Activated CD4-positive, alpha-beta memory T cell treated with anti-CD3 and anti-CD28 coated beads for 36 hours (primary cell): ENCODE measurements at regions of chr7 and their contacts with region 1.

Region 1: GRCh38 chr7:157336383-157337315 is at the start of gene DNAJB6:
- DNase-seq: peak; percentile 96
- H3K4me3 Mint-ChIP-seq: peak within 1 kb of the TSS; percentile 96
- H3K27ac Mint-ChIP-seq: peak within 1 kb of the TSS; percentile 97
- H3K4me1 Mint-ChIP-seq: peaks cover 33% of the 10 kb centered on the region
- H3K27me3 Mint-ChIP-seq: peaks cover 3% of the 10 kb centered on the region
- total RNA-seq, gene DNAJB6: 90.7 to 97.2 TPM

Region 2: DNA sequence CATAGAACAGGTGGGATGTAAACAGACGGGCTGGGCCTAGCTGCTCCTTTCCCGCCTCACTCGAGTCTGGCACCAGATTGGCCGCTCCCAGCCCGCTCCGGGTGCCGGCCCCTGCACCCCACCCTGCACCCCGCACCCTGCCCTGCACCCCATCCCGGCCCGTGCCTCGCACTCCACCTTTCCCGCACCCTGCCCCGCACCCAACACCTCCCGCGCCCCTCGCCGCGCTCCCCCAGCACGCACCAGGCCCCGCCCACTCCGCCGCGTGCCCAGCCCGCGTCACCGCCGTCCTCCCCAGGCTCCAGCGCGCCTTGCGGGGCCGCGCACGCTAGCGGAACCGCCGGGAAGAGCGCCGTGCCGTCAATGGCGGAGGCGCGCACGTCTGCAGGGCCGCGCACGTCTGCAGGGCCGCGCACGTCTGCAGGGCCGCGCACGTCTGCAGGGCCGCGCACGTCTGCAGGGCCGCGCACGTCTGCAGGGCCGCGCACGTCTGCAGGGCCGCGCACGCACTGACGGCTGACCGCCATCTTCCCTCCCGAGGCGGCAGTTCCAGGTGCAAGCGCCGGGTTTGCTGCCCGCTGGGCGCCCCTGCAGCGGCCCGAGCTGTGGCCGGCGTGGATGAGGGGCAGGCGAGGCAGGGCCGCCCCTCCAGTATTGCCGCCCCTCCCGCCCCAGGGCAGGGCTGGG is 198.1 kb before region 1 on chr7 and contains the start of gene UBE3C:
- CTCF ChIA-PET with region 1: interaction called, 3 read pairs
- POLR2A ChIA-PET with region 1: no interaction called
- intact Hi-C with region 1: loop called (anchors 2 kb)
- DNase-seq: peak; percentile 91
- H3K4me3 Mint-ChIP-seq: peak within 1 kb of the TSS; percentile 79
- H3K27ac Mint-ChIP-seq: peak within 1 kb of the TSS; percentile 91
- H3K4me1 Mint-ChIP-seq: peaks cover 37% of the 10 kb centered on the region
- H3K27me3 Mint-ChIP-seq: no peaks in the 10 kb centered on the region
- total RNA-seq, gene UBE3C: 59.8 to 59.9 TPM

Region 3: DNA sequence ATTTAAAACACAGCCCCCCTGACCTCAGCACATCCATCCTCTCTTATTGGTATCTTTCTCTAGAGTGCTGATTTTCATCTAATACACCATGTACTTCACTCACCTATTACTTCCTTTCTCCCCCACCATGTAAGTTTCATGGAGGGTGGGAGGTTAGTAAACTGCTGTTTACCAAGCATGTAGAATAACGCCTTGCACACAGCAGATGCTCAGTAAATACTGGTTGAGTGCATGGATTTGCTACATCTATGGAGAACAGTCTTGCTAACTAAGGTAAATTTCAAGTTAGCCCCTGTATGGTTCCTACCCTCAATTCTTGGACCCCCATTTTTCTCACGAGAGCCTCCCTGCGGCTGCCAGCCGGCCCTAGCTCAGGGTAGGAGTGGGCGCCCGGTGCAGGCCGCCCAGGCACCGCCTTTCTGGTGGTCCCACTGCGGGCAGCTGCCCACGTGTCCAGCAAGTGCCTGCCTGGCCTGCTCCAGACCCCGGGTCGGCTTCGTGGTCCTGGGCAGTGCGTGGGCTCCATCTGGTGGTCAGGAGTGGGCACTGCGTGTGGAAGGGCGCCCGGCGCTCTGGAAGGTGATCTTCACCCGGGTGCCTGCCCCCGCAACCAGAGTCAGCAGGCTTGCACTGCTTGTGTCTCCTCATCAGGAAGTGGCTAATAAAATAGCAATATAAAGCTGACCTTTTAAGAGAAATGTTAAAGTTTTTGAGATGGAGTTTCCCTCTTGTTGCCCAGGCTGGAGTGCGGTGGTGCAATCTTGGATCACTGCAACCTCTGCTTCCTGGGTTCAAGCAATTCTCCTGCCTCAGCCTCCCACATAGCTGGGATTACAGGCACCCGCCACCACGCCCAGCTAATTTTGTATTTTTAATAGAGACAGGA is 63.2 kb before region 1 on chr7:
- CTCF ChIA-PET with region 1: interaction called, 16 read pairs
- POLR2A ChIA-PET with region 1: no interaction called
- intact Hi-C with region 1: loop called (anchors 2 kb)
- DNase-seq: peak; percentile 75
- H3K4me3 Mint-ChIP-seq: no peak overlapping the region
- H3K27ac Mint-ChIP-seq: no peak overlapping the region
- H3K4me1 Mint-ChIP-seq: peaks cover 27% of the 10 kb centered on the region
- H3K27me3 Mint-ChIP-seq: peaks cover 3% of the 10 kb centered on the region

Region 4: DNA sequence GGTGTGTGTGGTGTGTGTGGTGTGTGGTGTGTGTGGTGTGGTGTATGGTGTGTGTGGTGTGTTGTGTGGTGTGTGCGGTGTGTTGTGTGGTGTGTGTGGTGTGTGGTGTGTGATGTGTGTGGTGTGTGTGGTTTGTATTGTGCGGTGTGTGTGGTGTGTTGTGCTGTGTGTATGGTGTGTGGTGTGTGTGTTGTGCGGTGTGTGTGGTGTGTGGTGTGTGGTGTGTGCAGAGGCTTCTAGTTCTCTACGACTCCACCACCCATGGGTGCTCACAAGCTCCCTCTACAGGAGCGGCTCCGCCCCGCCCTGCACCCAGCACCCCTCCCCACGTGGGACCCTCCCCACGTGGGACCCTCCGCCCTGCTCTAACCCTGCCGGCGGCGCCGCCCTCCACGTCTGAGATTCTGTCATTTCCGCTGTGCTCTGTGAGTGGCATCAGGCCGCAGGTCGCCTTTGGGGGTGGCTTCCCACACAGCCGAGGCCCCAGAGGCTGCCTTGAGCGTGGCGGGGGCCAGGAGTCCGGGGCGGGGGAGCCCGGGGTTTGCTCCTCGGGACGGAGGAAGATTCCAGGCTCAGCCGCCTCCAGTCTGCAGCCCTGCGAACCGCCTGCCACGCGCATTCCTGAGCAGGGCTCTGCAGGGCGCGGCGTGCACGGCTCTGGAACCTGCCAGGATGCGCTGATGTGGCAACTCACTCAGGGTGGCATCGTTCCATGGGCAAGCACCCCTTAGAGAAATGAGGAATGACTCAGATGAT is 36.9 kb before region 1 on chr7:
- CTCF ChIA-PET with region 1: interaction called, 18 read pairs
- POLR2A ChIA-PET with region 1: interaction called, 16 read pairs
- intact Hi-C with region 1: loop called (anchors 1 kb)
- DNase-seq: peak; percentile 44
- H3K4me3 Mint-ChIP-seq: no peak overlapping the region
- H3K27ac Mint-ChIP-seq: peak overlapping the region; percentile 68
- H3K4me1 Mint-ChIP-seq: peaks cover 39% of the 10 kb centered on the region
- H3K27me3 Mint-ChIP-seq: no peaks in the 10 kb centered on the region

Region 5: DNA sequence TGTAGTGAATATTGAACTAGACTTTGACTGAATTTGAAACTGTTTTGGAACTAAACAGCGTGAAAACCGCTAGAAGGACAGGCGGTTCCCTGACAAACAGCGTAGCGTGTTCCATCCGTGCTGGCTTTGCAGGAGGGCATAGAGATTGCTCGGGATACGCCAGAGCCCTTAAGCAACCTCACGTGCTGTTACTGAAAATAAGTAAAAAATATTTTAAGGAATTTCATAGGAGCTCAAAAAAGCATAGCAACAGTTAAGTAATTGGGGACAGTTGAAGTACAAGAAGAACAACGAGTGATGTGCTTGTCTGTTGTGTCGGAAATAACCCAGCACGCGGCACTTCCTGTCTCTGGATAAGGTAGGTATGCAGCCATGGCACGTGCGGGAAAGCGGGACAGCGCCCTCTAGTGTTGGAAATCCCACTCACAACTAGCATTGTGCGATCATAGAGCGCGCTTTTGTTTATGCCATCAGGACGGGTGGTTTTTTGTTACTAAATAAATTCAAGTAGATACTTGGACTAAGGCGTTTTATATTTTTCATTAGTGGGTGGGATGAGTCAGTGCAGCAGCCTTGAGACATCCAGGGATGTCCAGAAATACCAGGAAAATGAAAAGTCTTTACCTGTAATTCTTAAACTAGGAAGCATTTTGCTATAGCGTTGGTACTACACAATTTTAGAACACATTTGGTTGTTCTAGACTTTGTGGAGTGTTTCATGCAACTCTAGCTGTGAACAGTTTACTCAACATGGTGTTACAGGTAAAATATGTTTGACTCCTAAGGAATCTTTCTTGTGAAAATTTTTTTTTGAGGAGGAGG is 50.5 kb after region 1 on chr7:
- CTCF ChIA-PET with region 1: interaction called, 15 read pairs
- POLR2A ChIA-PET with region 1: interaction called, 3 read pairs
- intact Hi-C with region 1: loop called (anchors 5 kb)
- DNase-seq: peak; percentile 94
- H3K4me3 Mint-ChIP-seq: no peak overlapping the region
- H3K27ac Mint-ChIP-seq: peak overlapping the region; percentile 72
- H3K4me1 Mint-ChIP-seq: peaks cover 39% of the 10 kb centered on the region
- H3K27me3 Mint-ChIP-seq: no peaks in the 10 kb centered on the region